CD8-positive, alpha-beta T cell (primary cell): ENCODE measurements at regions of chr2 and their contacts with region 1.

Region 1: DNA sequence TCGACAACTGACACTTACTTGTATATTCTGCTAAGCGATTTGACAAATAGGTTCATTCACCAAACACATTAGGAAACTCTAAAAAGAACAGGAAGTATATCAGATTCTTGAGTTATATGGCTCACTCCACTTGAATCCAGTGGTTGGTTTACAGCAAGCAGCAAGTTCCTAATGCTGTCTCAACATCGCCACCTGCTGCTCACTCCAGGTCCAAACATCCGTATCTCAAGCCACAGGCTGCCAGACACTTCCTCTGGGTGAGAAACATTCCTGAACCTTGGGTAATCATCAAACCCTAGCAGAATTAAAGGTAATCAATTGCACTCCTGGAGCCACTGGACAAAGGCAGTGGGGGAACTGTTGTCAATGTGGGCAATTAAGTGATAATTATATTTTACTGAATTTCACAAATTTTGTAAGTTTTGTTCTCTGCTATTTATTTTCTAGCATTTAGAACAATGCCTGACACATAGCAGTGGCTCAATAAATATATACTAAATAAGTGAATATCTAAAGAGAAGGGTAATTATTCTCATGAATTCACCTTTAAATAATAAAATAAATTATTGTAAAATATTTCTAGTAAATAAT is 107.1 kb upstream of the TTN start:
- DNase-seq: peak; percentile 37 to 77 (median 66)
- ATAC-seq: peak; percentile 88
- H3K4me3 ChIP-seq: no peak overlapping the region
- H3K4me3 Mint-ChIP-seq: no peak overlapping the region
- H3K27ac ChIP-seq: no peak overlapping the region
- H3K27ac Mint-ChIP-seq: no peak overlapping the region
- H3K4me1 ChIP-seq: no peaks in the 10 kb centered on the region
- H3K4me1 Mint-ChIP-seq: peaks cover 2% of the 10 kb centered on the region
- H3K27me3 ChIP-seq: no peaks in the 10 kb centered on the region
- H3K27me3 Mint-ChIP-seq: no peaks in the 10 kb centered on the region
- CTCF ChIP-seq: peak; percentile 82

Region 2: GRCh38 chr2:178761759-178762371 is 152.5 kb before region 1 on chr2:
- CTCF ChIA-PET with region 1: interaction called, 4 read pairs
- POLR2A ChIA-PET with region 1: no interaction called
- intact Hi-C with region 1: loop called (anchors 1 to 5 kb)
- DNase-seq: peak in 4 of 9 experiments; percentile 16 to 57 (median 33)
- ATAC-seq: peak; percentile 29
- H3K4me3 ChIP-seq: no peak overlapping the region
- H3K4me3 Mint-ChIP-seq: no peak overlapping the region
- H3K27ac ChIP-seq: no peak overlapping the region
- H3K27ac Mint-ChIP-seq: no peak overlapping the region
- H3K4me1 ChIP-seq: no peaks in the 10 kb centered on the region
- H3K4me1 Mint-ChIP-seq: no peaks in the 10 kb centered on the region
- H3K27me3 ChIP-seq: no peaks in the 10 kb centered on the region
- H3K27me3 Mint-ChIP-seq: no peaks in the 10 kb centered on the region
- CTCF ChIP-seq: peak; percentile 90

Region 3: GRCh38 chr2:178796079-178796677 is 118.2 kb before region 1 on chr2:
- CTCF ChIA-PET with region 1: interaction called, 5 read pairs
- POLR2A ChIA-PET with region 1: no interaction called
- intact Hi-C with region 1: loop called (anchors 1 to 2 kb)
- DNase-seq: peak in 2 of 9 experiments; percentile 17 to 47
- ATAC-seq: no peak
- H3K4me3 ChIP-seq: no peak overlapping the region
- H3K4me3 Mint-ChIP-seq: no peak overlapping the region
- H3K27ac ChIP-seq: no peak overlapping the region
- H3K27ac Mint-ChIP-seq: no peak overlapping the region
- H3K4me1 ChIP-seq: no peaks in the 10 kb centered on the region
- H3K4me1 Mint-ChIP-seq: no peaks in the 10 kb centered on the region
- H3K27me3 ChIP-seq: no peaks in the 10 kb centered on the region
- H3K27me3 Mint-ChIP-seq: no peaks in the 10 kb centered on the region
- CTCF ChIP-seq: peak; percentile 70

Region 4: GRCh38 chr2:178891265-178891958 is 22.9 kb before region 1 on chr2:
- CTCF ChIA-PET with region 1: interaction called, 10 read pairs
- POLR2A ChIA-PET with region 1: no interaction called
- intact Hi-C with region 1: loop called in 1 of 2 experiments (anchors 2 kb)
- DNase-seq: peak; percentile 9 to 69 (median 55)
- ATAC-seq: peak; percentile 79
- H3K4me3 ChIP-seq: no peak overlapping the region
- H3K4me3 Mint-ChIP-seq: no peak overlapping the region
- H3K27ac ChIP-seq: no peak overlapping the region
- H3K27ac Mint-ChIP-seq: no peak overlapping the region
- H3K4me1 ChIP-seq: no peaks in the 10 kb centered on the region
- H3K4me1 Mint-ChIP-seq: peaks cover 7% of the 10 kb centered on the region
- H3K27me3 ChIP-seq: no peaks in the 10 kb centered on the region
- H3K27me3 Mint-ChIP-seq: no peaks in the 10 kb centered on the region
- CTCF ChIP-seq: peak; percentile 93

Region 5: GRCh38 chr2:178928077-178928476 is 13.7 kb after region 1 on chr2:
- CTCF ChIA-PET with region 1: interaction called, 11 read pairs
- POLR2A ChIA-PET with region 1: no interaction called
- intact Hi-C with region 1: no loop called
- DNase-seq: no peak
- ATAC-seq: no peak
- H3K4me3 ChIP-seq: no peak overlapping the region
- H3K4me3 Mint-ChIP-seq: no peak overlapping the region
- H3K27ac ChIP-seq: no peak overlapping the region
- H3K27ac Mint-ChIP-seq: no peak overlapping the region
- H3K4me1 ChIP-seq: no peaks in the 10 kb centered on the region
- H3K4me1 Mint-ChIP-seq: no peaks in the 10 kb centered on the region
- H3K27me3 ChIP-seq: no peaks in the 10 kb centered on the region
- H3K27me3 Mint-ChIP-seq: no peaks in the 10 kb centered on the region
- CTCF ChIP-seq: no peak

Region 6: GRCh38 chr2:179020156-179020750 is 105.9 kb after region 1 on chr2:
- CTCF ChIA-PET with region 1: interaction called, 4 read pairs
- POLR2A ChIA-PET with region 1: no interaction called
- intact Hi-C with region 1: loop called in 1 of 2 experiments (anchors 10 kb)
- DNase-seq: peak in 6 of 9 experiments; percentile 31 to 52 (median 42)
- ATAC-seq: peak; percentile 94
- H3K4me3 ChIP-seq: no peak overlapping the region
- H3K4me3 Mint-ChIP-seq: no peak overlapping the region
- H3K27ac ChIP-seq: no peak overlapping the region
- H3K27ac Mint-ChIP-seq: no peak overlapping the region
- H3K4me1 ChIP-seq: peaks cover 16% of the 10 kb centered on the region
- H3K4me1 Mint-ChIP-seq: peaks cover 36% of the 10 kb centered on the region
- H3K27me3 ChIP-seq: no peaks in the 10 kb centered on the region
- H3K27me3 Mint-ChIP-seq: no peaks in the 10 kb centered on the region
- CTCF ChIP-seq: peak; percentile 31